ENCODE measurements at regions of chr1 and their contacts with region 1.

Region 1: DNA sequence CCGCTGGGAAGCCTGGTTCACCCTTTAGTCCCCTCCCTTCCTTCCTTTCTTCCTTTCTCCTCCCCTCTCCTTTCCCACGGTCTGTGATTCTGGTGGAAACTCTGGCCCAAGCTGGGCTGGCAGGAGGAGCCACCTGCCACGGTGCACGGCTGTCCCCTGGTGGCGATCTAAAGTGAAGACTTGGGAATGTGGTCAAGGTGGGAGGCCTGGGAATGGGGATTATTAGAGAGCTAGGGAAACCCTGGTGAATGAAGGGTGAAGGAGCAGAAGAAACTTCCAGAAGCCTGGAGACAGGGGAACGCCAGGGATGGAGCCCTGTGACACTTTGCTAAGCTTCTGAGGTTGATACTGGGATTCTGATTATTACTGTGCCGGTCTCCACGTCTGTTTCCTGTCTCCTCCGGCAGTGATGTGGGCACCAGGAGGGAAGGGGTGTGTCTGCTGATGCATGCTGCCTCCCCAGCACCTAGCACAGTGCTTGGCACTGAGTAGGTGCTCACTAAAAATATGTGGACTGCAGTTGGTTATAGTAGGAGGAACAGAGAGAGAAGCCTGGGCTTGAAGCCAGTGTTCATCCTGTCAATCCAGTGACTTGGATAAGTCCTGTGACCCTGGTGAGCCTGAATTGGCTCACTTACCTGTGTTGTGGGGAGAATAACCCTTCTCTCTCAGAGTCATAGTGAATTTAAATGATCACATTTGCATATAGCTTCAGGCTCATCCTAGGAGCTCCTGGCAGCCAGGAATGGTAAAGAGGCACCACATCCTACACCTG is 71.2 kb upstream of the NBPF3 start:
- DNase-seq: peak; percentile 92
- H3K4me3 ChIP-seq: no peak overlapping the region
- H3K27ac ChIP-seq: no peak overlapping the region
- H3K4me1 ChIP-seq: peaks cover 7% of the 10 kb centered on the region
- H3K27me3 ChIP-seq: no peaks in the 10 kb centered on the region
- CTCF ChIP-seq: peak; percentile 97 to 98
- POLR2A ChIP-seq: no peak

Region 2: DNA sequence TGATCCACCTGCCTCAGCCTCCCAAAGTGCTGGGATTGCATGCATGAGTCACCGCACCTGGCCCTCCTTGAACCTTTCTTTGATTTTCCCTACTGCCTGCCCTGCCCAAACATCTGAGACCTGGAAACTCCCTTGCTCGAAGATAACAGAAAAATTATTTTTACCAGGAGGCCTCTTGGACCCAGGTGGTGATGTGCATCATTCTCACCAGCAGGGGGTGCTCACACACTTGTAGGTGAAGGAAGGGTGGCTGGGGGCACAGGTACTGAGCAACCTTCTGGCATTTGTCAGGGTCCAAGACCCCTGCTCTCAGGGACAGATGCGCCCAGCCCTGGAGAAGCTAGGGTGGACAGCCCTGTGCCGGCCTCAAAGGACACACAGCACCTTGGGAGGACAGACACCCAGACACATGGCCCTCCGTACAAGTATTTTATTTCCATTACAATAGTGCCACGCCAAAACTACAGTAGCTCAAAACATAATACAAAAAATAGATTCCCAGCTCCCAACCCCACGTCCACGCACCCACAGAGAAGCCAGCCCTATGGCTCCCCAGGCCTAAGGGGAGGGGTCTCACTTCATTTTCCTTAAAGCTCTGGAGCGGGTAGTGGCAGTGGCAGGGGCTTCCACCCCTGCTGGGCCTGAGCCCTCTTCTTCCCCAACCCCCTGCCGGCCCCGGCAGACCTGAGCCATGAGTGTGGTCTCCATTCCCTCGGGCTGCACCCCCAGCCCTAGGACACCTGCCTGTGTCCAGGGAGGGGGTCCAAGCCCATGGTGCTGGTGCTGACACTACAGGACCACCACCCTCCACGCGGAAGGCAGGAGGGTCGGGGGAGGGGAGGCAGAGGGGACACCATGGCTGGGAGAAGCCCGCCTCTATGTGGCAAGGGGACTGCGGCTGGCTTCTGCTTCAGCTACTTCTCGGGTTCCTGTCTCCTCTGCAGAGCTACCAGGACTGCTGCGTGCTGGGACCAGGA is 151.6 kb before region 1 on chr1:
- CTCF ChIA-PET with region 1: interaction called, 59 read pairs
- POLR2A ChIA-PET with region 1: interaction called, 4 read pairs
- dilution Hi-C with region 1: no loop called
- intact Hi-C with region 1: loop called (anchors 1 kb)
- DNase-seq: peak; percentile 50
- H3K4me3 ChIP-seq: no peak overlapping the region
- H3K27ac ChIP-seq: no peak overlapping the region
- H3K4me1 ChIP-seq: peaks cover 6% of the 10 kb centered on the region
- H3K27me3 ChIP-seq: no peaks in the 10 kb centered on the region
- CTCF ChIP-seq: peak; percentile 70 to 86
- POLR2A ChIP-seq: no peak

Region 3: DNA sequence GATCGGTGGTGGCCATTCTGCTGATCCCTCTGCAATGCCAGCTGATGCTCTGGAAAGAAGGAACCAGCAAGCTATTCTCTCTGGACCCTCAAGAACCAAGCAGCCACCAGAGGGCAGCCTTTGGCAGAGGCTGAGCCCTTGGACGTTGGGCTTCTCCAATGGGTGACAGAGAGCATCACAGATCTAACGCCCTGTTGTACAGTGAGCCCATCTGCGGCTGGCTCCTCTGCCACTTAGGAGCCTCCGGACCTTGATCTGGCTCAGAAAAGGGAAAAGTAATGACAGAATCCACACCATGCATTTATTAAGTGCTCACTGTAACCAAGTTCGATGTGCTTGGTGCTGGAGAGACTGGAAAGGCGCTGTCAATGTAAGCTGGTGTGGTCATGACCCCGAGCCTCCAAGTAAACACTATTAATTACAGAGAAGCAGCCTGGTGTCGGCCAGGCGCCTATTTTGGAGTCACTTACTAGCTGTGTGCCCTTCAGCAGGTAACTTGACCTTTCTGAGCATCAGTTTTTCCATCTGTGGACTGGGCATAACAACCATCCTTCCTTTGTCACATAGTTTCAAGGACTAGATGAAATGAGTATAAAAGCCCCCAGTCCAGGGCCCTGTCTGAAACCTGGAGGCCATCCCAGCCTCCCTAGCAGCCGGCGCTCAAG is 113.3 kb before region 1 on chr1:
- CTCF ChIA-PET with region 1: interaction called, 301 read pairs
- POLR2A ChIA-PET with region 1: interaction called, 4 read pairs
- dilution Hi-C with region 1: no loop called
- intact Hi-C with region 1: loop called (anchors 1 kb)
- DNase-seq: peak; percentile 85
- H3K4me3 ChIP-seq: no peak overlapping the region
- H3K27ac ChIP-seq: no peak overlapping the region
- H3K4me1 ChIP-seq: peaks cover 27% of the 10 kb centered on the region
- H3K27me3 ChIP-seq: no peaks in the 10 kb centered on the region
- CTCF ChIP-seq: peak; percentile 78 to 88
- POLR2A ChIP-seq: no peak

Region 4: DNA sequence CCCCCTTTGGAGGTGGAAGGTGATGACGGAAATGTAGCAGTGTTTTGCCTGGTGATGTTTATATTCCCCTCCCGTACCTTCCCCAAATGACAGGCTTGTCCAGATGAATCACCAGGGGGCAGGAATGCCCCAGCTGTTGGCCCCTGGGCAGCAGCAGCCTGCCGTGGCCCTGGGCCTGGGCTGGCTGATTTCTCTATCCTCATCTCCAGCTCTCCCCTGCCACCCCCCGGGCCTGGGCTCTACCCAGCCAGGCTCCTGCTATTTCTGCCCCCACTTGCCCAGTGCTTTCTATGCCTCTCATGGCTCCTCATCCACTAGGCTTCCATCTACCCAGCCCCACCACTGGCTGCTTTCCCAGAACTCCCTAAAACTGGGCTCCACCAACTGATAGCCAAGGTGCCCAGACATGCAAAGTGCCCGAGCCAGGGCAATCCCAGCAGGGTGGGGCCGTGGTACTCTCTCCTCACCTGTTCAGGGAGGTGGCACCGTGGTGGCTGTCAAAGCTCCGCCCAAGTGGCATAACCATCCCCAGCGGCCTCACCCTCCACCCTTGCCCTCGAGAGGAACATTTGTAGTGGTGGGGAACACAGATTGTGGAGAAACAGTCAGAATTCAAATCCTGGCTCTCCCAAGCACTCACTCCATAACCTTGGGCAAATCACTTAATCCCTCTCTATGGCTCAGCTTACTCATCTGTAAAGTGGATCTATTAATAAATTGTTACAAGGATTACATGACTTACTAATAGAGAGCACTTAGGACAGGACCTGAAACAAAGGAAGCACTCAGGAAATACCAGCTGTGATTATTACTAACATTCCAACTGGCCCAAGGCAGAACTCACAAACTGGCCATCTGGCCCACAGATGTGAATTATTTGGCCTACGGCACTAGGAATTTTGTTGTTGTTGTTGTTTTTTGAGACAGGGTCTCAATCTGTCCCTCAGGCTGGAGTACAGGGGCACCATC is 65.7 kb before region 1 on chr1:
- CTCF ChIA-PET with region 1: interaction called, 20 read pairs
- POLR2A ChIA-PET with region 1: interaction called, 3 read pairs
- dilution Hi-C with region 1: no loop called
- intact Hi-C with region 1: loop called (anchors 1 kb)
- DNase-seq: peak; percentile 78
- H3K4me3 ChIP-seq: no peak overlapping the region
- H3K27ac ChIP-seq: peak overlapping the region; percentile 90
- H3K4me1 ChIP-seq: peaks cover 46% of the 10 kb centered on the region
- H3K27me3 ChIP-seq: no peaks in the 10 kb centered on the region
- CTCF ChIP-seq: peak; percentile 4 to 19
- POLR2A ChIP-seq: peak; percentile 26

Region 5: GRCh38 chr1:21355956-21356355 is 12.7 kb before region 1 on chr1:
- CTCF ChIA-PET with region 1: interaction called, 13 read pairs
- POLR2A ChIA-PET with region 1: no interaction called
- dilution Hi-C with region 1: no loop called
- intact Hi-C with region 1: no loop called
- DNase-seq: no peak
- H3K4me3 ChIP-seq: no peak overlapping the region
- H3K27ac ChIP-seq: no peak overlapping the region
- H3K4me1 ChIP-seq: no peaks in the 10 kb centered on the region
- H3K27me3 ChIP-seq: no peaks in the 10 kb centered on the region
- CTCF ChIP-seq: no peak
- POLR2A ChIP-seq: no peak

Region 6: GRCh38 chr1:21508580-21509350 is 140.1 kb after region 1 on chr1:
- CTCF ChIA-PET with region 1: interaction called, 13 read pairs
- POLR2A ChIA-PET with region 1: no interaction called
- dilution Hi-C with region 1: no loop called
- intact Hi-C with region 1: no loop called
- DNase-seq: peak; percentile 8
- H3K4me3 ChIP-seq: no peak overlapping the region
- H3K27ac ChIP-seq: no peak overlapping the region
- H3K4me1 ChIP-seq: peaks cover 3% of the 10 kb centered on the region
- H3K27me3 ChIP-seq: peaks cover 51% of the 10 kb centered on the region in 2 experiments
- CTCF ChIP-seq: peak; percentile 35 to 76
- POLR2A ChIP-seq: no peak

Region 7: DNA sequence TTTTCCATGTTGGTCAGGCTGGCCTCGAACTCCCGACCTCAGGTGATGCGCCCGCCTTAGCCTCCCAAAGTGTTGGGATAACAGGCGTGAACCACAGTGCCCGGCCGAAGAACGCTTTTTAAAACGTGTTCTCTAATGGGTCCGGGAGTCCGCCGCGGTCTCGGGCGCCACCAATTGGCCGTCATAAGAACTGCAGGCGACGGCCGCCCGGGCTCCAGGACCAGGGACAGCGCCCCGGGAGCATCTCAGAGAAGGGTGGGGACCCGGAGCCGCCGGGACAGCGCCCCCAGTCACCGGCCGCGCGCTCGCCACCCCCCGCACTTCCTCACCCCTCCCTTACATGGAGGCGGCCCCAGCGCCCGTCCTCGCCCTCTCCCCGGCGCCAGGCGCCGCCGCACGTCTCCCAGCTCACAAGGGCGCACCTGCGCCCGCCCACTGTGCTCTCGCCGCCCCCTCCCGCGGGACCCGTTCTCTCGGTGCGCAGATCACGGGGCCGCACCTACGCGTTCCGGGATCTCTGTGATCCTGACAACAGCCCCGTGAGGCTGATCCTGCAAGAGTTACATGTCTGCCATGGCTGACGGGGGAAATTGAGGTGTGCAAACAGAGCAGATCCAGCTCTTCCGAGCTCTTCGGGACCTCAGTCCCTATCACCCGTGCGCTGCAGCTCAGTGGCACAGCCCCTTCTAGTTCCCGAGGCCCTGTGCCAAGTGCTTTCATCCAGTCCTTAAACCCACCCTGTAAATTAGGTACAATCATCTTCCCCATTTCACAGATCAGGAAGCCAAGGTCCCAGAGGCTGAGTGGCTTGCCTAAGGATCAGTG is 290.6 kb after region 1 on chr1:
- CTCF ChIA-PET with region 1: interaction called, 90 read pairs
- POLR2A ChIA-PET with region 1: no interaction called
- dilution Hi-C with region 1: no loop called
- intact Hi-C with region 1: loop called (anchors 1 kb)
- DNase-seq: peak; percentile 70
- H3K4me3 ChIP-seq: no peak overlapping the region
- H3K27ac ChIP-seq: no peak overlapping the region
- H3K4me1 ChIP-seq: no peaks in the 10 kb centered on the region
- H3K27me3 ChIP-seq: peaks cover 7% of the 10 kb centered on the region in 2 experiments
- CTCF ChIP-seq: peak; percentile 87 to 92
- POLR2A ChIP-seq: no peak